ENCODE measurements at regions of chr6 and their contacts with region 1.

Region 1: DNA sequence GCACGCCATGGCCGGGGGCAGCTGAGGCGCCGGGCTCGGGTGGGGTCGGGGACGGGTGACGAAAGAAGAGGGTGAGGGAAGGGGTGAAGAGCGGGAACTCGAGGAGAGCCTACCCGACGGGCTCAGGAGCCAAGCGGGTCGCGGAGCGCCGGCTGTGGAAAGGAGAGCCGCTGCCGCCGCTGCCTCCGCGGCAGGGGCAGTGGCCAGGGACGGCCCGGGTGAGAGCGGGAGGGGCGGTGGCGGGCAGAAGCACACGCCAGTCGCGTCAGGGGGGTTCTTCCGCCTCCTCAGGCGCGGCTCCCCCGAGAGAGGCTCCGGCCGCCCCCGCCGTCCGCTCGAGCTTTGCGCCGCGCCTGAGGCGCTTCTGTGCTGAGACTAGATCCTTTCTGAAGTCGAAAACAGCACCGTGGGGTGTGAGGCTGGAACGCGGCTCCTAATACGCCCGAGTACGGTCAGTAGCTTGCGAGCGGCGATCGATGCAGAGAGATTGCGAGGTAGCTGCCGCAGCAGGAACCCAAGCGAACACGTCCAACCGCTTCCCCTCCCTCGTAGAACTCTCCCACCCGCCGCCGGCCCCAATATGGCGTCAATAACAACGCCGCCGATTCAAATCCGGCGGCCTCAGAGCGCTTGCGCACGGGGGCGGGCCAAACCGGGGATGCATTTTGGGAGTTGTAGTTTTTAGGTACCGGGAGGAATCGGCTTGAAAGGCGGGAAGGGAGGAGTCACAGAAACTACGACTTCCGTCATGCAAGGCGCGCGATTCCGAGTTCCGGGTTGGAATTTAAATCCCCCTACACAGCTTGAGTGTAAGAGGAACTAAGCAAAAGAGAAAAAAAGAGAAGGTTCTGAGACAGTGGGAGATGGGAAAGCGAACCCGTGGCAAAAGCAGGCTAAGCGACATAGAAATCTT is at the start of gene AKIRIN2:
- DNase-seq: peak; percentile 98
- H3K4me3 Mint-ChIP-seq: peak within 1 kb of the TSS; percentile 86
- H3K27ac Mint-ChIP-seq: peak within 1 kb of the TSS; percentile 91
- H3K4me1 Mint-ChIP-seq: peaks cover 43% of the 10 kb centered on the region
- H3K27me3 Mint-ChIP-seq: no peaks in the 10 kb centered on the region
- total RNA-seq, gene AKIRIN2: 45.7 to 46.0 TPM

Region 2: DNA sequence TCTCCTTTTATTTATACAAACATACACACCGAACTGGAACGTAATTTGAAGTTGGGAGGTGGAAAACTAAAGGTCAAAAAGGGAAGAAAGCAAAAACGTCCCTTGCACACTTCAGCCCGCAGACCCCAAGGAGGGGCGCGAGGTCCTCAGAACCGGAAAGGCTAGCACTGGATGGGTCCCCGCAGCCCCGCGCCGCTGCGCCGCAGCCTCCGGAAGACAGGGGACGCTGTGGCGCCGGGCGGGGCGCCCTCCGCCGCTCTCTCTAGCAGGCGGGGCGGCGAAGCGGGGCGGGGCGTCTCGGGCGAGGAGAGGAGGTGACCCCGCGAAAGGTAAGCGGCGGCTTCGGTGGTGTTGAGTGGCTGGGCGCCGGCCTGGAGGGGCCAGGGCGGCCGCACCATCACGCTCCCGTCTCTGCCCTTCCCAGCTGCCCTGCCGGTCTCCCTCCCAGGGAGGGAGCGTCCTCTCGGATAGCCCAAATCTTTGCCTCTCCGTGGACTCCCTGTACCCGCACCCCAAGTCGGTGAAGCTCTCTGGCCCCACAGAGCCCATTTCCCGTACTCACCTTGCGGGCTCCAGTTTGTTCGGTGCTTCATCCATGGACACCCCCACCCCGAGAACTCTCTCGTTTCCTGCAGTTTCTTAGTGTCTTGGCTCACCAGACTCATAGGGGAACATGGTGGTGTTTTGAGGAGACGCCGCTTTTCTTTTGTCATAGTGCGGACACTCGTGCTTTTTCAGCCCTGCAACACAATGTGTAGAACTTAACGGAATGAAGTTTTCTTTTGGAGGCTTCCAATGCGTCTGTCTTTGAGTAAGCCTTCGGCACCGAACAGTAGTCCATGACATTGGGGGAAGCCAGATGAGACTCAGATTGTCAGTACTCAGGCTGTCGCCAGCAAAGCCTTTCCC is 379.4 kb before region 1 on chr6 and contains the start of gene SMIM8:
- CTCF ChIA-PET with region 1: no interaction called
- POLR2A ChIA-PET with region 1: no interaction called
- intact Hi-C with region 1: loop called (anchors 2 kb)
- DNase-seq: peak; percentile 90
- H3K4me3 Mint-ChIP-seq: peak within 1 kb of the TSS; percentile 98
- H3K27ac Mint-ChIP-seq: peak within 1 kb of the TSS; percentile 76
- H3K4me1 Mint-ChIP-seq: peaks cover 15% of the 10 kb centered on the region
- H3K27me3 Mint-ChIP-seq: no peaks in the 10 kb centered on the region
- total RNA-seq, gene SMIM8: 7.6 to 8.1 TPM

Region 3: GRCh38 chr6:87589693-87590549 is 112.0 kb before region 1 on chr6 and contains the starts of genes ORC3 and RARS2:
- CTCF ChIA-PET with region 1: no interaction called
- POLR2A ChIA-PET with region 1: interaction called, 6 read pairs
- intact Hi-C with region 1: loop called (anchors 1 kb)
- DNase-seq: peak; percentile 98
- H3K4me3 Mint-ChIP-seq: peak within 1 kb of the TSS; percentile 85
- H3K27ac Mint-ChIP-seq: peak within 1 kb of the TSS; percentile 79
- H3K4me1 Mint-ChIP-seq: peaks cover 49% of the 10 kb centered on the region
- H3K27me3 Mint-ChIP-seq: no peaks in the 10 kb centered on the region
- total RNA-seq, gene ORC3: 35.0 to 38.7 TPM
- total RNA-seq, gene RARS2: 20.0 to 20.8 TPM

Region 4: DNA sequence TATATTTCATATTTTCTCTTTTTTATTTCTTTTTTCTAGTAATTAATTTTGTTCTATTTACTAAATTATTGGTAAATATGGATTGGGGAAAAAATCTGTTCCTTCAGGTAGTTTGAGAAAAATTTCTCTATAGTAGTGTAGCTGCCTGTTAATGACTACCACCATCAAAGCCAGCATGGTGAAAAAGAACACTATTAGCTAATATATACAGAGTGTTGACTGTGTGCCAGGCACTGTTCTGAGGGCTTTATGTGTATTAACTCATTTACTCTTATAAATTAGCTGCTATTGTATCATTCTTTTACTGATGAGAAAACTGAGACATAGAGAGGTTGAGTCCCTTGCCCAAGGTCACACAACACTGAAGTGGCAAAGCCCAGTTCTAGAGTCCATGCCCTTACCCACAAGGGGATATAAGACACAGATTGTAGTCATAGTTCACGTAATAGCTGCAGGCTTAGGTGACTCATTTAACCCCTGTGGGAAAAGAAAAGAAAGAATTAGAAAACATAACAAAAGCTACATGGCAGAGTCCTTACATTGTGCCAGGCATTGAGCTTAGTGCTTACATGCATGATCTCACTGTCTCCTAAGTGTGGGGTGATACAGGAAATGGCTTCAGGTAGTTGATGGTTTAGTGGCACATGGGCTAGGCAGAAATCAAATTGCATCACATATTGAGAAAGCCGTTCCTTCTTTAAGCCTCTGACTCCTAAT is 12.3 kb after region 1 on chr6:
- CTCF ChIA-PET with region 1: no interaction called
- POLR2A ChIA-PET with region 1: interaction called, 7 read pairs
- intact Hi-C with region 1: loop called (anchors 1 kb)
- DNase-seq: no peak
- H3K4me3 Mint-ChIP-seq: no peak overlapping the region
- H3K27ac Mint-ChIP-seq: peak overlapping the region; percentile 23
- H3K4me1 Mint-ChIP-seq: peaks cover 9% of the 10 kb centered on the region
- H3K27me3 Mint-ChIP-seq: no peaks in the 10 kb centered on the region

Region 5: DNA sequence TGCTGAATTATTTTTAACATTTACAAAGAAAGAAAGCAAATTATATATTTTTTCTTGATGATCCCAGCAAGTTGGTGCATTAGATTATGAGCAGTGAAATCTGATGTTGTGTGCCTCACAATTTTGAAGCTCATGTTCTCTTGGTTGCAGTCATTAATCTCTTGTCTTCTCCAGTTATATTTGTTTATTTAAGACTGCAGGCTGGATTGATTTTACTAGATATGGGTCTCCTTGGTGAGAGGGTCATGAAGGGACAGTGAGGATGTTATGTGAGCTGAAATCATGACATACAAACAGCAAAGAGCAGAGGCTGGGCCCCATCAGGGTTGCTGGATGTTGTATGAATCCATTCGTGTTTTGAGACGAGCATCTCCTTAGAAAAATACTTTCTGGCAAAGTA is 64.3 kb after region 1 on chr6:
- CTCF ChIA-PET with region 1: no interaction called
- POLR2A ChIA-PET with region 1: no interaction called
- intact Hi-C with region 1: no loop called
- DNase-seq: no peak
- H3K4me3 Mint-ChIP-seq: no peak overlapping the region
- H3K27ac Mint-ChIP-seq: no peak overlapping the region
- H3K4me1 Mint-ChIP-seq: no peaks in the 10 kb centered on the region
- H3K27me3 Mint-ChIP-seq: no peaks in the 10 kb centered on the region

Region 6: DNA sequence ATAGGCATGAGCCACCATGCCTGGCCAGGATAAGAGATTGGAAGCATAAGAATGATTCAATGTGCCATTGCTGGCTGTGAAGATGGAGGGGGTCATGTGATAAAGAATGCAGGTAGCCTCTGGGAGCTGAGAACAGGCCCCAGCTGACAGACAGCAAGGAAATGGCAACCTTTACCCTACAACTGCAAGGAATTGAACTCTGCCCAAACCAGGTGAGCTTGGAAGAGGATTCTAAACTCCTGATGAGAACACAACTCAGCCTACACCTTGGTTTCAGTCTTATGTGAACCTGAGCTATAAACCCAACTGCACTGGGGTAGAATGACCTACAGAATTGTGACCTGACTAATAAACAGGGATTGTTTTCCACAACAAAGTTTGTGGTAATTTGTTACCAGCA is 82.1 kb after region 1 on chr6:
- CTCF ChIA-PET with region 1: no interaction called
- POLR2A ChIA-PET with region 1: no interaction called
- intact Hi-C with region 1: no loop called
- DNase-seq: no peak
- H3K4me3 Mint-ChIP-seq: no peak overlapping the region
- H3K27ac Mint-ChIP-seq: no peak overlapping the region
- H3K4me1 Mint-ChIP-seq: no peaks in the 10 kb centered on the region
- H3K27me3 Mint-ChIP-seq: no peaks in the 10 kb centered on the region

Region 7: DNA sequence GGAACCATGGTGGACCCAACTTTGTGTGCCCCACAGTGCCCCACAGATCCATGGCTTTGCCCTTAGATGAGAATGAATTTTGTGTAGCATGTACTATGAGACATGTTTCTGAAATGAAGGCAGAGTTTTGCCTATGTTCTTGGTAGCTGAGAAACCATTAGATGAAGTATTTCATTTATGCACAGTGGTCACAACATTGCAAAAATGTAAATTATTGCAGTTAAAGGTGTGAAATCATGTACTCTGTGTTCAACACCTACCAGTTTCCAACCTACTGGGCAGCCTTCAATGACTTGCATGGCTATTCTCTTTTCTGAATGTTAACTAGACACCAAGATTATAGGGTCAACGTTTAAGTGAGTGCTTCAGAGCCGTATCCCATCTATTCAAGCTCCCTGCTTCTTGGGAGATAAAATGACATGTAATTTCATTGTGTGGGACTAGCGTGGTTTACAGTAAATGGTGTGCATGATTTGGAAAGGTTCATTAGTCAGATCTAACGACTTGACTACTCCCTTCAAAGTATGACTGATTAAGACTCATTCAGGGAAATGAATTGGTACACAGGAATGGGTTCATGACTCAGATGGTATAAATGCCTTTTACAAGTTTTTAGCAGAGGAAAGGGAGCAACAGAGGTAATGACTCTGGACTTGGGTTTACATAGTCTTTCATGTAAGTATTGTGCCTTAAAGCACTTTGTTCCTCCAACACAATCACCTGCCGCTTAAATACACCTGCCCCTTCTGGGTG is 106.2 kb after region 1 on chr6:
- CTCF ChIA-PET with region 1: no interaction called
- POLR2A ChIA-PET with region 1: interaction called, 12 read pairs
- intact Hi-C with region 1: loop called (anchors 1 kb)
- DNase-seq: peak; percentile 17
- H3K4me3 Mint-ChIP-seq: no peak overlapping the region
- H3K27ac Mint-ChIP-seq: peak overlapping the region; percentile 89
- H3K4me1 Mint-ChIP-seq: peaks cover 34% of the 10 kb centered on the region
- H3K27me3 Mint-ChIP-seq: peaks cover 17% of the 10 kb centered on the region

Region 8: GRCh38 chr6:89080542-89081422 is 1378.8 kb after region 1 on chr6 and contains the start of gene PNRC1:
- CTCF ChIA-PET with region 1: no interaction called
- POLR2A ChIA-PET with region 1: no interaction called
- intact Hi-C with region 1: loop called (anchors 1 kb)
- DNase-seq: peak; percentile 100
- H3K4me3 Mint-ChIP-seq: peak within 1 kb of the TSS; percentile 93
- H3K27ac Mint-ChIP-seq: peak within 1 kb of the TSS; percentile 99
- H3K4me1 Mint-ChIP-seq: peaks cover 33% of the 10 kb centered on the region
- H3K27me3 Mint-ChIP-seq: no peaks in the 10 kb centered on the region
- total RNA-seq, gene PNRC1: 95.1 TPM

Measured in activated CD4-positive, alpha-beta memory T cell treated with anti-CD3 and anti-CD28 coated beads for 36 hours (primary cell).